ENCODE measurements at regions of chr10 and their contacts with region 1.

Region 1: DNA sequence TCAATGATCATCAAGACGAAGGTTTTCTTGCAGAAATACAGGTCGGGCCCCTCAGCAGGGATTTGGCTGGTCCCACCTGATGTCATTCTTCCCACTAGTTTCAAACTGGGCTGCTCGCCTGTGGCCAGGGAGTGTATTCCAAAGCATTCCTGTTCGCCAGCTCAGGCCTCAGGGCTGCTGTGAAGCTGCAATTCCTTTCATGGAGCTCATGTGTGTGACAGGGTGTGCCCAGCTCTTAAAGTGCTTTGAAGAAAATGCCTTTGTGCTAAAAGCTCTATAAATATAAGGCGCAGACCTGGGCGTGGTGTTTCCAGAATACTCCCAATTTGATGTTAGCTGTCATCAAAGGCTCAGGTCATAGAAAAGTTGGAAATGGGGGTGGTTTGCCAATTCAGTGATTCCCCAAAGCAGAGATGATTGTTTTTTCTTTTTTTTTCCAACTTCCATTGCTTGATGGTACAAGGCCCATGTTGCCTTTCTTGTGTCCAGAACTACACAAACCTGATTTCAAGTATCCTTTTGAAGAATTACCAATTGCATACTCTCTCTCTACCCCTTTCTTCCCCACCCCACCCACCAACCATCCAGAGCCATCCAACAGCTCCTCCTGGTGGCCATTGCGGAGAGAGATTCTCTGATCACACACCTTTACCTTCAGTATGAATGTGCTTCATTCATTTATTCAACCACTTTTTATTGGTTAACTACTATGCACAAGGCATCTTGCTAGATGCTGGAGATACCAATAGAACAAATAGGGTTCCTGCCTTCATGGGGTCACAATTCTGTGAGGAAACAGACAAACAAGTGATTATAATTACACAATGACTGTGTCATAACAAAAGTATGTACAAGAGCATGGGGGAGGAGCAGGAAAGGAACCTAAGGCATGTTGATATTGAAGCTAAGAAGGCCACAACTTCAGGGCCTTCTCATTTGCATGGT is 297.3 kb upstream of the LYZL1 start:
- DNase-seq: peak; percentile 32 to 35
- ATAC-seq: peak; percentile 57 to 97 (median 86)
- H3K4me3 ChIP-seq: no peak overlapping the region
- H3K27ac ChIP-seq: peak overlapping the region in 4 of 10 donors; percentile 39 to 68 (median 44)
- H3K4me1 ChIP-seq: peaks cover 0 to 9% (median 0%) of the 10 kb centered on the region in 9 donors
- H3K27me3 ChIP-seq: no peaks in the 10 kb centered on the region
- CTCF ChIP-seq: peak; percentile 30 to 80 (median 68)

Region 2: GRCh38 chr10:29120237-29120636 is 128.6 kb after region 1 on chr10:
- intact Hi-C with region 1: loop called in 1 of 10 experiments (anchors 10 kb)
- DNase-seq: no peak
- ATAC-seq: no peak
- H3K4me3 ChIP-seq: no peak overlapping the region
- H3K27ac ChIP-seq: no peak overlapping the region
- H3K4me1 ChIP-seq: no peaks in the 10 kb centered on the region
- H3K27me3 ChIP-seq: no peaks in the 10 kb centered on the region
- CTCF ChIP-seq: no peak

Measured in heart right ventricle (tissue), 16 donors.